CD4-positive, alpha-beta memory T cell (primary cell): ENCODE measurements at regions of chr2 and their contacts with region 1.

Region 1: GRCh38 chr2:143217512-143218115 is 88.4 kb downstream of the ARHGAP15 start:
- DNase-seq: no peak
- H3K4me3 ChIP-seq: no peak overlapping the region
- H3K4me3 Mint-ChIP-seq: peak overlapping the region in 2 of 8 donors; percentile 9 to 24
- H3K27ac ChIP-seq: no peak overlapping the region
- H3K27ac Mint-ChIP-seq: peak overlapping the region; percentile 42 to 83 (median 70)
- H3K4me1 ChIP-seq: peaks cover 37% of the 10 kb centered on the region
- H3K4me1 Mint-ChIP-seq: peaks cover 42 to 61% (median 51%) of the 10 kb centered on the region in 4 donors
- H3K27me3 ChIP-seq: no peaks in the 10 kb centered on the region
- H3K27me3 Mint-ChIP-seq: no peaks in the 10 kb centered on the region

Region 2: GRCh38 chr2:143034292-143035074 is 183.1 kb before region 1 on chr2:
- CTCF ChIA-PET with region 1: no interaction called
- POLR2A ChIA-PET with region 1: interaction called, 3 read pairs
- intact Hi-C with region 1: loop called (anchors 1 kb)
- DNase-seq: peak; percentile 58 to 83 (median 77)
- H3K4me3 ChIP-seq: no peak overlapping the region
- H3K4me3 Mint-ChIP-seq: no peak overlapping the region
- H3K27ac ChIP-seq: no peak overlapping the region
- H3K27ac Mint-ChIP-seq: no peak overlapping the region
- H3K4me1 ChIP-seq: no peaks in the 10 kb centered on the region
- H3K4me1 Mint-ChIP-seq: peaks cover 0 to 4% (median under 1%) of the 10 kb centered on the region in 4 donors
- H3K27me3 ChIP-seq: no peaks in the 10 kb centered on the region
- H3K27me3 Mint-ChIP-seq: peaks cover 0 to 4% of the 10 kb centered on the region in 2 donors

Region 3: GRCh38 chr2:143177096-143177786 is 40.4 kb before region 1 on chr2:
- CTCF ChIA-PET with region 1: interaction called, 4 read pairs
- POLR2A ChIA-PET with region 1: no interaction called
- intact Hi-C with region 1: loop called (anchors 5 kb)
- DNase-seq: peak in 3 of 5 donors; percentile 16 to 18 (median 18)
- H3K4me3 ChIP-seq: peak overlapping the region in 1 of 2 donors; percentile 34
- H3K4me3 Mint-ChIP-seq: peak overlapping the region; percentile 77 to 93 (median 86)
- H3K27ac ChIP-seq: peak overlapping the region; percentile 66
- H3K27ac Mint-ChIP-seq: peak overlapping the region; percentile 90 to 97 (median 94)
- H3K4me1 ChIP-seq: peaks cover 57% of the 10 kb centered on the region
- H3K4me1 Mint-ChIP-seq: peaks cover 47 to 66% (median 57%) of the 10 kb centered on the region in 4 donors
- H3K27me3 ChIP-seq: no peaks in the 10 kb centered on the region
- H3K27me3 Mint-ChIP-seq: no peaks in the 10 kb centered on the region

Region 4: GRCh38 chr2:143205106-143205764 is 12.4 kb before region 1 on chr2:
- CTCF ChIA-PET with region 1: interaction called, 69 read pairs
- POLR2A ChIA-PET with region 1: interaction called, 4 read pairs
- intact Hi-C with region 1: loop called (anchors 1 kb)
- DNase-seq: peak in 4 of 5 donors; percentile 54 to 60 (median 57)
- H3K4me3 ChIP-seq: no peak overlapping the region
- H3K4me3 Mint-ChIP-seq: peak overlapping the region in 4 of 8 donors; percentile 16 to 64 (median 34)
- H3K27ac ChIP-seq: no peak overlapping the region
- H3K27ac Mint-ChIP-seq: peak overlapping the region in 5 of 7 donors; percentile 39 to 77 (median 67)
- H3K4me1 ChIP-seq: peaks cover 42% of the 10 kb centered on the region
- H3K4me1 Mint-ChIP-seq: peaks cover 55 to 66% (median 57%) of the 10 kb centered on the region in 4 donors
- H3K27me3 ChIP-seq: no peaks in the 10 kb centered on the region
- H3K27me3 Mint-ChIP-seq: no peaks in the 10 kb centered on the region

Region 5: DNA sequence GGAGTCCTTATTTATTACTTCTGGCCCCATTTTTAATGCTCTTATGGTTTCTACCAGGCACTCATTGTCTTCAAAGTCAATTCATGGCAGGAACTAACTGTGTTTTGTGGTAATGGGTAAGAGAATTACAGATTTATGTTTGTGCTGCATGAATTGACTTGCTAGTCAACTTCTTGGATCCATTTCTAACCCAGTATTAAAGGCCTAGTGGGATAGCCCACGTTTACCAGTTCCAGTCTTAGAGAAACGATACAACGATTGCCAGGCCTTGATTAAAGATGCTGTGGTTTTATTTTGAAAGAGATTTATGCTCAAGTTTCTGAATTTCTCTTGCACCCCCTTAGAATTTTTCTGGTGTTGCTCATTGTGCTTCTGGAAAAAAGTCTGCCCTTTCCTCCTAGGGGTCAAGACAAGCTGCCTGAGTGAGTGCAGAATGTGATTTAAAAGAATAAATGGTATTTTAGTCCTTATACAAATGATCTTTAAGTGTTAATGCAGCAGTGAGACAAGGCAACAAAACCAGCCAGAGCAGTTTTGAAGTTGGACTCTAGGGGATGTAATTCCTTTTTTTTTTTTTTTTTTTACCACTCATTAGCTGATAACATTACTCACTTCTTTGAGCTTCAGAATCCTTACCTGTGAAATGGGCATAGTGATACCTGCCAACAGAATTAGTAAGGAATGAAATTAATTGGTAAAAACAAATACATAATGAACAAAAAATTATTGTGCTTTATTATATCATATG is 13.1 kb after region 1 on chr2:
- CTCF ChIA-PET with region 1: interaction called, 13 read pairs
- POLR2A ChIA-PET with region 1: no interaction called
- intact Hi-C with region 1: no loop called
- DNase-seq: no peak
- H3K4me3 ChIP-seq: no peak overlapping the region
- H3K4me3 Mint-ChIP-seq: peak overlapping the region in 2 of 8 donors; percentile 54 to 58
- H3K27ac ChIP-seq: no peak overlapping the region
- H3K27ac Mint-ChIP-seq: peak overlapping the region in 2 of 7 donors; percentile 13 to 72
- H3K4me1 ChIP-seq: peaks cover 26% of the 10 kb centered on the region
- H3K4me1 Mint-ChIP-seq: peaks cover 19 to 46% (median 25%) of the 10 kb centered on the region in 4 donors
- H3K27me3 ChIP-seq: no peaks in the 10 kb centered on the region
- H3K27me3 Mint-ChIP-seq: no peaks in the 10 kb centered on the region

Region 6: GRCh38 chr2:143246815-143247744 is 29.5 kb after region 1 on chr2:
- CTCF ChIA-PET with region 1: interaction called, 18 read pairs
- POLR2A ChIA-PET with region 1: interaction called, 5 read pairs
- intact Hi-C with region 1: no loop called
- DNase-seq: peak; percentile 44 to 59 (median 45)
- H3K4me3 ChIP-seq: peak overlapping the region; percentile 71 to 74
- H3K4me3 Mint-ChIP-seq: no peak overlapping the region
- H3K27ac ChIP-seq: peak overlapping the region; percentile 43
- H3K27ac Mint-ChIP-seq: peak overlapping the region in 1 of 7 donors; percentile 97
- H3K4me1 ChIP-seq: peaks cover 71% of the 10 kb centered on the region
- H3K4me1 Mint-ChIP-seq: peaks cover 20 to 31% (median 24%) of the 10 kb centered on the region in 4 donors
- H3K27me3 ChIP-seq: no peaks in the 10 kb centered on the region
- H3K27me3 Mint-ChIP-seq: no peaks in the 10 kb centered on the region

Region 7: GRCh38 chr2:143321994-143322393 is 104.4 kb after region 1 on chr2:
- CTCF ChIA-PET with region 1: no interaction called
- POLR2A ChIA-PET with region 1: no interaction called
- intact Hi-C with region 1: no loop called
- DNase-seq: peak in 2 of 5 donors; percentile 5 to 18
- H3K4me3 ChIP-seq: no peak overlapping the region
- H3K4me3 Mint-ChIP-seq: peak overlapping the region in 5 of 8 donors; percentile 14 to 63 (median 50)
- H3K27ac ChIP-seq: no peak overlapping the region
- H3K27ac Mint-ChIP-seq: peak overlapping the region in 4 of 7 donors; percentile 44 to 60 (median 50)
- H3K4me1 ChIP-seq: peaks cover 40% of the 10 kb centered on the region
- H3K4me1 Mint-ChIP-seq: peaks cover 48 to 91% (median 74%) of the 10 kb centered on the region in 4 donors
- H3K27me3 ChIP-seq: no peaks in the 10 kb centered on the region
- H3K27me3 Mint-ChIP-seq: no peaks in the 10 kb centered on the region